Activated CD4-positive, alpha-beta memory T cell treated with anti-CD3 and anti-CD28 coated beads, Interleukin-2, amount 10 ng/mL, durations not matched to agents 7 days and 5 days (primary cell): ENCODE measurements at regions of chr9 and their contacts with region 1.

Region 1: GRCh38 chr9:94213511-94214124 is 45.5 kb upstream of the ZNF169 start:
- DNase-seq: peak; percentile 76
- H3K4me3 Mint-ChIP-seq: no peak overlapping the region
- H3K27ac Mint-ChIP-seq: no peak overlapping the region
- H3K4me1 Mint-ChIP-seq: peaks cover 3% of the 10 kb centered on the region
- H3K27me3 Mint-ChIP-seq: peaks cover 8% of the 10 kb centered on the region

Region 2: GRCh38 chr9:94014065-94014654 is 199.5 kb before region 1 on chr9:
- CTCF ChIA-PET with region 1: interaction called, 50 read pairs
- POLR2A ChIA-PET with region 1: no interaction called
- DNase-seq: no peak
- H3K4me3 Mint-ChIP-seq: no peak overlapping the region
- H3K27ac Mint-ChIP-seq: no peak overlapping the region
- H3K4me1 Mint-ChIP-seq: no peaks in the 10 kb centered on the region
- H3K27me3 Mint-ChIP-seq: peaks cover 2% of the 10 kb centered on the region

Region 3: DNA sequence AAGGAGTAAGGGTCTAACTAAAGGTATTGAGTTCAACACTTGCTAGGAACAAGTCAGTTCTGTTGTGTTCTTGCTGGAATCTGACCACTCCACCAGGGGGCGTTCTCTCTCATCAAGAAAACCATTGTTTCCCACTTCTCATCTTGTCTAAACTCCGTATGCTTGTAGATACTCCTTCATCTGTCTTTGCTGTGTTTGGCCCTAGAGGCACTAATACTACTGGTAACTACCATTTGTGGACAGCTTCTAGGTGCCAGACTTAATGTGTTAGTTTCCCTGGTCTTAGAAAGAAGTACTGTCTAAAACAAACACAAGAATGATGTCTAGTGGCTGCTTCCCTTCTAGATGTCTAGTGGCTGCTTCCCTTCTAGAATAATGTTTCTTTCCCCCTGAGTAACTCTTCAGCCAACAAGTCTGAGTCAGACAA is 148.1 kb before region 1 on chr9:
- CTCF ChIA-PET with region 1: interaction called, 126 read pairs
- POLR2A ChIA-PET with region 1: interaction called, 3 read pairs
- DNase-seq: peak; percentile 73
- H3K4me3 Mint-ChIP-seq: no peak overlapping the region
- H3K27ac Mint-ChIP-seq: no peak overlapping the region
- H3K4me1 Mint-ChIP-seq: peaks cover 2% of the 10 kb centered on the region
- H3K27me3 Mint-ChIP-seq: no peaks in the 10 kb centered on the region

Region 4: DNA sequence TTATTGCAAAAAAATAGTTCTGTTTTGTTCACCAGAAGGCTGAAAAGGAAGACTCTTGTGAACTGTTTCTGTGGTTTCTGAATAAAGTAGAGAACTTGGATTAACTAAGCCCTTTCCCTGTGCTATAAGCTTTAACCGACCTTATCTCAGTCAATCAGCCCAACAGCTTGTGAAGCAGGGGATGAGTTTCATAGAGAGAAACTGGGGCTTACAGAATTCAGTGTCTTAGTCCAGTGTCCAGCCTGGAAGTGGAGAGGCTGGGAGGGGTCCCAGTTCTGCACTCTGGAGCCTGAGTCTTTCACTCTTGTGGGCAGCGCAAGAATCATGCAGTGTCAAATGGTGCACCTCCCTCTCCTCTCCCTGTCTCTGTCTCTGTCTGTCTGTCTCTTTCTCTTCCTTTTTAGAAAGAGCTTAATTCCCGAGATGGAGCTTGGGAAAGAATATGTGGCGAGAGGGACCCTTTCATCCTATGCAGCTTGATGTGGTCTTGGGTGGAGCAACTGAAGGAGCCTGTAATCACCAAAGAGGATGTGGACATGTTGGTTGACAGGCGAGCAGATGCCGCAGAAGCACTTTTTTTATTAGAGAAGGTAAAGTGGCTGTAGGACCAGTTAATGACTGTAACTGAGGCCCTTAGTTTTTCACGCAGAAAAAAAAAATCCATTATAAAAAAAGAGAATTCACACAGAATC is 112.3 kb before region 1 on chr9:
- CTCF ChIA-PET with region 1: no interaction called
- POLR2A ChIA-PET with region 1: no interaction called
- DNase-seq: no peak
- H3K4me3 Mint-ChIP-seq: no peak overlapping the region
- H3K27ac Mint-ChIP-seq: no peak overlapping the region
- H3K4me1 Mint-ChIP-seq: peaks cover 4% of the 10 kb centered on the region
- H3K27me3 Mint-ChIP-seq: no peaks in the 10 kb centered on the region